Activated CD8-positive, alpha-beta T cell treated with anti-CD3 and anti-CD28 coated beads, Interleukin-2, amount 10 ng/mL, durations not matched to agents 7 days and 5 days (primary cell): ENCODE measurements at regions of chr1 and their contacts with region 1.

Region 1: DNA sequence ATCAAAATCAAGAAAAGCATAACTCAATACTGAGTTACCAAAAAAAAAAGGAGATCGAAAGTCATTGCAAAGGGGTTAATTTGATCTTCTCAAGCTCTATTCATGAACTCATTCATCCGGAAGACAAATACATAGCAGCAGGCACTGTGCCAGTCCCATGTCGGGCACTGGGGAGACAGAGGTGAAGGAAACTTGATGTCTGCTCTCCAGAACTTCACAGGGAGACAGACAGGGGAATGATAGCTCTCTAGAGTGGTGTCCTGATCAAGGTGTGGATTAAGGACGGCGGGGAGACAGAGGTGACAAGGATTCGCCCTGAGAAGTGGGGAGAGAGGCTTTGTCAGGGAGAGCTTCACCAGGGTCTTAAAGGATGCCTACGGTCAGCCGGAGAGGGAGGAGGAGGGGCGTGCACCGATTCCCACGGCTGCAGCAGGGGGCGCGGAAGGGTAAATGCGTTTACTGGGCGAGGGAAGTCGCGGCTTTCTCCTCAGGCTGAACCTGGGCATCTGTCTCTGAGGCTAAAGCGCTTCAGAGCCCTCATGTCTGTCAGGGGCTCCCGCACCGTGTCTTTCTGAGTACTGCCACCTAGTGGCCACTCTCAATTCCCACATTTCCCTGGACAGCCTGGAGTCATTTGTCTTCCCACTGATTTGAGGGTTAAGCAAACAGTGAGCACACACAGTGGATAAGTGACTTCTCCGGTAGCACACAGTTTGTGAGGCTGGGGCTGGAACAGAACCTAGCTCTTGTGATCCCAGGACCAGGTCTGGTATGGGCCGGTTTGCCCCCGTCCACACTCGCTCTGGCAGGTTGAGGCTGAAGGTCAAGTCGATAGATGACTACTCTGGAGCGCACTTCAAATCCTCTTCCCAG is 152.8 kb downstream of the TENT5C start:
- DNase-seq: peak; percentile 79
- ATAC-seq: peak; percentile 96
- H3K4me3 Mint-ChIP-seq: peak overlapping the region; percentile 67
- H3K27ac Mint-ChIP-seq: peak overlapping the region; percentile 1
- H3K4me1 Mint-ChIP-seq: peaks cover 15% of the 10 kb centered on the region
- H3K27me3 Mint-ChIP-seq: peaks cover 34% of the 10 kb centered on the region

Region 2: GRCh38 chr1:117171900-117172511 is 586.7 kb before region 1 on chr1:
- CTCF ChIA-PET with region 1: no interaction called
- POLR2A ChIA-PET with region 1: no interaction called
- DNase-seq: no peak
- ATAC-seq: no peak
- H3K4me3 Mint-ChIP-seq: no peak overlapping the region
- H3K27ac Mint-ChIP-seq: no peak overlapping the region
- H3K4me1 Mint-ChIP-seq: no peaks in the 10 kb centered on the region
- H3K27me3 Mint-ChIP-seq: peaks cover 6% of the 10 kb centered on the region

Region 3: GRCh38 chr1:117501281-117501680 is 257.4 kb before region 1 on chr1:
- CTCF ChIA-PET with region 1: interaction called, 139 read pairs
- POLR2A ChIA-PET with region 1: no interaction called
- DNase-seq: no peak
- ATAC-seq: no peak
- H3K4me3 Mint-ChIP-seq: no peak overlapping the region
- H3K27ac Mint-ChIP-seq: no peak overlapping the region
- H3K4me1 Mint-ChIP-seq: no peaks in the 10 kb centered on the region
- H3K27me3 Mint-ChIP-seq: no peaks in the 10 kb centered on the region

Region 4: GRCh38 chr1:117527566-117528102 is 231.0 kb before region 1 on chr1:
- CTCF ChIA-PET with region 1: interaction called, 320 read pairs
- POLR2A ChIA-PET with region 1: no interaction called
- DNase-seq: no peak
- ATAC-seq: no peak
- H3K4me3 Mint-ChIP-seq: no peak overlapping the region
- H3K27ac Mint-ChIP-seq: no peak overlapping the region
- H3K4me1 Mint-ChIP-seq: no peaks in the 10 kb centered on the region
- H3K27me3 Mint-ChIP-seq: no peaks in the 10 kb centered on the region

Region 5: DNA sequence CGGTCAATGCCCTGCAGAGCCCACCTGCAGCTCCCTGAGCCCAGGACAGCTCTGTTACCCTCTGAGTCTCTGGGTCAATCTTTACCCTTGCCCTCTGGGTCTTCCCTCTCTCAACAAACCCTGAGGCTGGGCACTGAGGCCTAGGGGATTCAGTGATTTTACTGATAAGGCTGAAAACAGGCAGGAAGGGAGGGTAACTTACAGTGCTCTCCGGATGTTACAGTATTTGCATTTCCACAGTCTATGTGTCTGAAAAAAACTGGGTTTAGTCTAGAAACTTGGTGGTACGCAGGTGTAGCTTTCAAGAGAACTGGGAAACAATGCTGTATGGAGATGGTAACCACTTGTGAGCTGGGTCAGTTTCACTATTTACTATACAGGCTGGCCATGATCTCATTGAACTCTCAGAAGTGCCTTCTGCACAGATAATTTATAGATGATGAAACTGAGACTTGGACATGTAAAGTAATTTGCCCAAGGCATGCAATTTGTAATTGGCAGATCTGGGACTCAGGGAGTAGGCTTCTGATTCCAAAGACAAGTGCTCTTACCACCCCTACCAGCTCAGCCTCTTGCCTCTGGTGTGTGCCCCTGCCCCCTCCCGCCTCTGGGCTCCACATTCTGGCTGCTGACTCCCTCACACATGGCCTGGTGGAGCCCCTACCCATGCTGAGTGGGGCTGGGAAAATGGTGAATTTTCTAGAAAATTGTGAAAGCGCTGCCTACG is 104.0 kb before region 1 on chr1:
- CTCF ChIA-PET with region 1: interaction called, 11 read pairs
- POLR2A ChIA-PET with region 1: interaction called, 3 read pairs
- DNase-seq: no peak
- ATAC-seq: peak; percentile 7
- H3K4me3 Mint-ChIP-seq: peak overlapping the region; percentile 25
- H3K27ac Mint-ChIP-seq: peak overlapping the region; percentile 86
- H3K4me1 Mint-ChIP-seq: peaks cover 76% of the 10 kb centered on the region
- H3K27me3 Mint-ChIP-seq: peaks cover 22% of the 10 kb centered on the region

Region 6: GRCh38 chr1:117710710-117711109 is 48.0 kb before region 1 on chr1:
- CTCF ChIA-PET with region 1: interaction called, 30 read pairs
- POLR2A ChIA-PET with region 1: no interaction called
- DNase-seq: no peak
- ATAC-seq: no peak
- H3K4me3 Mint-ChIP-seq: no peak overlapping the region
- H3K27ac Mint-ChIP-seq: no peak overlapping the region
- H3K4me1 Mint-ChIP-seq: no peaks in the 10 kb centered on the region
- H3K27me3 Mint-ChIP-seq: peaks cover 26% of the 10 kb centered on the region

Region 7: GRCh38 chr1:117740496-117740895 is 18.2 kb before region 1 on chr1:
- CTCF ChIA-PET with region 1: interaction called, 23 read pairs
- POLR2A ChIA-PET with region 1: no interaction called
- DNase-seq: no peak
- ATAC-seq: no peak
- H3K4me3 Mint-ChIP-seq: no peak overlapping the region
- H3K27ac Mint-ChIP-seq: no peak overlapping the region
- H3K4me1 Mint-ChIP-seq: peaks cover under 1% of the 10 kb centered on the region
- H3K27me3 Mint-ChIP-seq: peaks cover 24% of the 10 kb centered on the region